ENCODE measurements at regions of chr3 and their contacts with region 1.

Region 1: GRCh38 chr3:27521179-27521871 is 37.1 kb upstream of the SLC4A7 start:
- DNase-seq: peak in 1 of 2 donors; percentile 60
- ATAC-seq: peak; percentile 82
- H3K4me3 ChIP-seq: no peak overlapping the region
- H3K27ac ChIP-seq: peak overlapping the region; percentile 30 to 80
- H3K4me1 ChIP-seq: peaks cover 0 to 16% of the 10 kb centered on the region in 2 donors
- H3K27me3 ChIP-seq: no peaks in the 10 kb centered on the region

Region 2: DNA sequence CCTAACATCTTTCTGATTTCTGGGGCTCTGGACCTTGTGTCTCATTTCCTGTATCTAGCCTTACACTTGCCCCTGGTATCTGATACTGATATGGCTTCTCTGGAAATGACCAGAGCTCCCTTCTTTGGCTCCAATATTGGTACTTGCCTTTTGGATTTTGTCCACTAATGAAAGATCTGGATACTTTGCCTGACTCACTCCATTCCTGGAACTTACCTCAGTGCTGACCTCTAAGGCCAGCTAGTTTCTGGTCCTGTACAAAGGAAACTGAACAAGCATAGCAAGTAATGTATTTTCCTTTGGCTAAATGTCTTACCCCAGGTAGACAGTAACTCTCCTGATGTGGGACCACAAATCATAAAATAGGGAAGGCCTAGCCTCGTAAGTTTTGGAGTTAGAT is 56.7 kb after region 1 on chr3:
- intact Hi-C with region 1: loop called in 1 of 2 experiments (anchors 5 kb)
- DNase-seq: no peak
- ATAC-seq: peak; percentile 39
- H3K4me3 ChIP-seq: no peak overlapping the region
- H3K27ac ChIP-seq: peak overlapping the region; percentile 68 to 77
- H3K4me1 ChIP-seq: peaks cover 0 to 2% of the 10 kb centered on the region in 2 donors
- H3K27me3 ChIP-seq: no peaks in the 10 kb centered on the region

Region 3: DNA sequence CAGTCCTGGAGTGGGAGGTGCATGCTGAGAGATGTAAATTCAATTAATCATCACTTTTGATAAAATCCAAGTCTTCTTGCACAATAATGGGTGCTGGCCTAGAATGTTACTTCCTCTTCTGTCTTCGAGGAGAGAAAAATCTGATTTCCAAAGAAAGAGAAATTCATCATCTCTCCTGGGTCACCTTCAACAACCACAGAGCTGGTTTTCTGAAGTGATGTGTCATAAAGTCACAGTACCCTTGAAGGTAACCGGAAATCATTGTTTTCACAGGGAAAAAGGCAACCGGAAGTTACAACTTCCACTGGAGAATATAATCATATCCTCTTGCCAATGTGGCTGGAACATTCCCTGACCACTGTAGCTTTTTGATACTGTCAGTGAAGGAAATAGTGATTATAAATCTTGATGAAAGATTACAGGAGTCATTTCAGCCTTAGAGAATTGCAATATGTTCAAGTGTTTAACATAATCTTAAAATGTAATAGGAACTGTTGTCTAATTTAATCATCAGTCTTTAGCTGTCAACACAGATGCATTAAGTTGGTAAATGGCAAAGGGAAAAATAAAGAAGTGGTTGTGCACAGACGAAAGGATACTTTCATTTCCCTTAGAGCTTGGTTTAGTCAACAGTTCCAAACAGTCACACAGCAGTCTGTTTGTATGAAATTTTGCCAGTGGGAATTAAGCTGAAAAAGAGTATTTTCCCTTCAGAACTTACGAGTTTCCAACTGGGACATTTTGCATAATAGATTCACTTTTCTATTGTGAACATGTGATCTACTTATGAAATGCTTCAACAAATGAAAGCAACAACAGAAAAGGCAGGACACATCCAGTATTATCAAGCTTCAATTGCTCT is 69.3 kb after region 1 on chr3:
- intact Hi-C with region 1: no loop called
- DNase-seq: no peak
- ATAC-seq: peak; percentile 81
- H3K4me3 ChIP-seq: no peak overlapping the region
- H3K27ac ChIP-seq: peak overlapping the region; percentile 71 to 95
- H3K4me1 ChIP-seq: peaks cover 0 to 9% of the 10 kb centered on the region in 2 donors
- H3K27me3 ChIP-seq: no peaks in the 10 kb centered on the region

Region 4: GRCh38 chr3:28151608-28152228 is 630.4 kb after region 1 on chr3:
- intact Hi-C with region 1: no loop called
- DNase-seq: no peak
- ATAC-seq: no peak
- H3K4me3 ChIP-seq: no peak overlapping the region
- H3K27ac ChIP-seq: no peak overlapping the region
- H3K4me1 ChIP-seq: no peaks in the 10 kb centered on the region
- H3K27me3 ChIP-seq: no peaks in the 10 kb centered on the region

Measured in aorta (tissue), 5 donors.